ENCODE measurements at regions of chr11 and their contacts with region 1.

Region 1: GRCh38 chr11:33899383-33900037 is 7.6 kb upstream of the LMO2 start:
- DNase-seq: no peak
- ATAC-seq: no peak
- H3K4me3 ChIP-seq: no peak overlapping the region
- H3K27ac ChIP-seq: no peak overlapping the region
- H3K4me1 ChIP-seq: peaks cover 19% of the 10 kb centered on the region
- H3K27me3 ChIP-seq: no peaks in the 10 kb centered on the region
- CTCF ChIP-seq: no peak
- EP300 ChIP-seq: no peak
- POLR2A ChIP-seq: no peak
- RAD21 ChIP-seq: no peak

Region 2: DNA sequence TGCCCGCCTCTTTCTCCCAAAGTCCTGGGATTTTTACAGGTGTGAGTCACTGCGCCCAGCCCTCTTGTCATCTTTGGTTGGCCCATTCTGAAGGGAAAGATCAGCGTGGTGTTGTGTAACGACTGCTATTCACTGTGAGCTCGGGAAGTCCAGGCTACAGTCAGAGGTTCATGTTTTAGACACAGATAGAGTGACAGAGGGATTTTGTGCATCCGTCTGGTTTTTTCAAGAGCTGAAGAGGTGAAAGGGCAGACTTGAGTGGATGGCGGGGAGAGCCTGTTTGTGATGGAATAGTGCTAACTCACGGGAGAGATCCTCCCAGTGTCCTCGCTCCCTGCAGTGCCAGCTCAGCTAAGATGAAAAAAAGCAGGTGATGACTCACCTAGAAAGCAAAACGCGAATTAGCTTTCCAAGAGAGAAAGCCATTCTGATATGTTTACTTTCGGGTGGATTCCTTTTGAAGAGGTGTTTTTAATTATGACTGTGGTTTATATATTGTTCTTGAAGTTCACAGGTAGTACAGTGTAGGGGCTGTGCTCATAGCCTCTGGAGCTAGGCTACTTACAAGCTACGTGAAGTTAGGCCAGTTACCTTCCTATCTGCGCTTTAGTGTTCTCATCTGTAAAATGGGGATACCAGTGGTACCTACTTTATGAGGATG is 266.1 kb before region 1 on chr11:
- CTCF ChIA-PET with region 1: no interaction called
- POLR2A ChIA-PET with region 1: no interaction called
- RAD21 ChIA-PET with region 1: no interaction called
- SMC1A ChIA-PET with region 1: no interaction called
- in situ Hi-C with region 1: no loop called
- intact Hi-C with region 1: no loop called
- DNase-seq: no peak
- ATAC-seq: no peak; the same call in 2 of the 3 replicates
- H3K4me3 ChIP-seq: no peak overlapping the region
- H3K27ac ChIP-seq: no peak overlapping the region
- H3K4me1 ChIP-seq: peaks cover 4% of the 10 kb centered on the region; the same call in 1 of the 2 replicates
- H3K27me3 ChIP-seq: no peaks in the 10 kb centered on the region
- CTCF ChIP-seq: no peak
- EP300 ChIP-seq: no peak
- POLR2A ChIP-seq: no peak
- RAD21 ChIP-seq: no peak

Region 3: DNA sequence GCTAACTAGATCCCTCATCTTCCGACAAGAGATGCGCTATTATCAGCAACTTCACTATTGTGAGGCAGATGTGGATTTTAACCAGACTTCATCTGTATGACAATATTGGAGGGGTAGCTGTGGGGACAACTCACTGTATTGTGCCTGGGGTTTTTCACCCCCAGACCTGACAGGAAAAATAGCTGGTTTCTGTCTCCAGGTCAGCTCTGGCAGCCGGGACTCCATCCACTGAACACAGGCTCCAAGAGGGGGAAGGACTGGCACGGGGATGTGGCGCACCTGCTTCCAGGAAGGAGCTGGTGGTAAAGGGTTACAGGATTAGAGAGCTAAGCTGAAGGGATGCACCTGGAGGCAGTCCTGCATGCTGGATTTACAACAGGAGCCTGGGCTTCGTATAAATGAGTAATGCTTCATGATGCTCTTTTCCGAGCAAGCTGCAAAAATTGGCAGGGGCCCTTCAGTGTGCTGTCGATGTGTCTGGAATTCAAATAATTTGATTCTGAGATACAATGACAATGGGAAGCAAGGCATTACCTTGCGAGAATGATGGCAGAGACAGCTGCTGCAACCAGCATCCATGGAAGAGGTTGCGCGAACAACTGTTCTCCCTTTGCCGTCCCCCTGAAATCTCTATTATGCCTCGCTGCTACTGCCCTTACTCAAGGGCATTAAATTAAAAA is 57.1 kb before region 1 on chr11:
- CTCF ChIA-PET with region 1: no interaction called
- POLR2A ChIA-PET with region 1: no interaction called
- RAD21 ChIA-PET with region 1: no interaction called
- SMC1A ChIA-PET with region 1: no interaction called
- in situ Hi-C with region 1: no loop called
- intact Hi-C with region 1: no loop called
- DNase-seq: no peak
- ATAC-seq: no peak
- H3K4me3 ChIP-seq: no peak overlapping the region
- H3K27ac ChIP-seq: no peak overlapping the region
- H3K4me1 ChIP-seq: no peaks in the 10 kb centered on the region
- H3K27me3 ChIP-seq: peaks cover 0 to 3% of the 10 kb centered on the region in 2 experiments; a peak in 1 of 4 replicates
- CTCF ChIP-seq: no peak
- EP300 ChIP-seq: no peak
- POLR2A ChIP-seq: no peak
- RAD21 ChIP-seq: no peak

Region 4: DNA sequence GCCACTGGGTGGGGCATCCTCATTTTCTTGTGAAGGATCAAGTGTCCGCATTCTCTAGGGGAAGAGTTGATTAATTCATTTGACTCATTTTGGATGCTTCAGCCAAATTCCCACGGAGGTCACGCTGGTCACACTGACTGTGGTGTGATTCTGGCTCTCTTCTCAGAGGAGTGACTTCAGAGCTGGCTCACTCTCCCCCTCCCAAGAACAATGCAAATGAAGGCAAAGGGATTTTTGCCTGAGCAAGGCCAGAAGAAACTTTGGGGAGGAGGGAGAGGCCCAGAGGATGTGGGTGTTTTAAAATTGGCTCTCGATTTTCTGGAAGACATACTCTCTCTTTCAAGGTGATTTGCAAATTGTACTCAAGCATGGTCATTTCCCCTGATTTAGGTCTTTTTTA is 43.4 kb after region 1 on chr11:
- CTCF ChIA-PET with region 1: no interaction called
- POLR2A ChIA-PET with region 1: no interaction called
- RAD21 ChIA-PET with region 1: no interaction called
- SMC1A ChIA-PET with region 1: interaction called, 4 read pairs
- in situ Hi-C with region 1: no loop called
- intact Hi-C with region 1: loop called (anchors 5 kb)
- DNase-seq: peak; percentile 73
- ATAC-seq: peak; percentile 67
- H3K4me3 ChIP-seq: peak overlapping the region; percentile 39; the same call in 1 of the 2 replicates
- H3K27ac ChIP-seq: peak overlapping the region; percentile 63
- H3K4me1 ChIP-seq: peaks cover 42% of the 10 kb centered on the region
- H3K27me3 ChIP-seq: no peaks in the 10 kb centered on the region
- CTCF ChIP-seq: no peak
- EP300 ChIP-seq: no peak
- POLR2A ChIP-seq: no peak
- RAD21 ChIP-seq: no peak